Right cardiac atrium (tissue), 5 donors: ENCODE measurements at regions of chr10 and their contacts with region 1.

Region 1: DNA sequence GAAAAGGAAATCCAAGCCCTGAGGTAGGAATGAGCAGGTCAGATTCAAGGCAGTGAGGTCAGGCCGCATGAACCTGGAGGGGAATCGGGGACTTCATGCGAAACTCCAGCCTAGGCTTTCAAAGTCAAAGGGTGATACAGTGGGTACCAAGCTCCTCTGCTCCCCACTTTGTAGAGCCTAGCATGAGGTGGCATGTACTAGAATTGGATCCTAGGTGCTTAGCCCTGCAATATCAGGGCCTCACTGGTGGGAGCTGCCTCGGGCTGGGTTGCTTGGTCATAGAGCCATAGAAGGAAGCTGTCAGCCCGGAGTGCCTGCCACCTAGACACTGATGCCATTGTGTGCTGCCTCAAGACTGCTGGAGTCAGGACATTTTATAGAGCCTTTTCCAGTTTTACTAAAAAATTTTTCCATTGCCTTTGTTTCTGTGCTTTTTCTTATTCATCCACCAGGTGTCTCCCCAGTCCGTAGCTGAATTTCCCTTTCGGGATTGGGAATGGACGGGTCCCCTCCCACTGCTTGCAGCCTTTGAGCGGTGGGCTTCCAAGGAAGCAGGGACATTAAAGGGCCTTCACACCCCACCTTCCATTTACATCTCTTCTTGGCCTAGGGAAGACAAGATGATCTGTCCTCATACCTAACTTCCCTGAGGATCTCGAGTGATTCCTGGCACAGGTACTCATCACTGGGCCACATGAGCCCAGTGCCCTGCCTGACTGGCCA is 5.5 kb upstream of the LZTS2 start:
- DNase-seq: no peak
- ATAC-seq: no peak
- H3K4me3 ChIP-seq: no peak overlapping the region
- H3K27ac ChIP-seq: no peak overlapping the region
- H3K4me1 ChIP-seq: peaks cover 6% of the 10 kb centered on the region
- H3K27me3 ChIP-seq: no peaks in the 10 kb centered on the region

Region 2: DNA sequence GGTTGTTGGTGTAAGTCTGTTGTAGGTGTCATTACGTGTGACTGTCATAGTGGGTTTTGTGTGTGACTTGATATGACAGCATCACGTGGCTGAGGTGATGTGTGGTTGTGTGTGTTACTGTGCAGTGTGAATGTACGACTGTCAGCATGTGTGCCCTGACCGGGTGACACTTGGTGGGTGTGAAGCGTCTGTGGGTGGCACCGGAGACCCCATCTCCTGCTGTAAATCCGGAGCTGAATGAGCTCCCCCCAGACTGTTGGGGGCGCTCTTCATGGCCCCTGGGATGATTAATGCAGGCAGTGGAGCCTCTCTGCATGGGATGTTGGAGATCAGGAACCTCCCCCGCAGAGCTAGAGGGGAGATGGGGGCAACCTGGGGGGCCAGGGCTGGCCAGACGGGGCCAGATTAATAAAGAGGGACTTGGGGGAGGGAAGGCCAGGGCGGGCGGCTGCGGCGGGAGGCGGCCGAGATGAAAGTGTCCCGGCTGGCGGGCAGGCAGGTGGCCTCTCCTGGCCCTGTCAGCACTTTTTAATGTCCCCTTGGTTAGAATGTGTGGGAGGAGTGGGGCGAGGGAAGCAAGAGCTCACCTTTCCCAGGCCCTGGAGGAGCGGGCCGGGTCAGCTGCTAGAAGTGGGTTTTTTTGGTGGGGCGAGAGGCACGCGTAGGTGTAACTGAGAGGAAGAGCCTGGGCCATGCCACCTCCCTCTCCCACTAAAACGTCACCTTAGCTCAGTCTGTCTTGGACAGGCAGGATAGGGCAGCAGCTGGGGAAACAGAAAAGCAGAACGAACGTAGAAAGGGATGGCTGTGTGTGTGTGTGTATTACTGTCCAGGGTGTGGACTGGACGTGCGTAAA is 424.3 kb before region 1 on chr10:
- intact Hi-C with region 1: no loop called
- DNase-seq: no peak
- ATAC-seq: no peak
- H3K4me3 ChIP-seq: no peak overlapping the region
- H3K27ac ChIP-seq: no peak overlapping the region
- H3K4me1 ChIP-seq: no peaks in the 10 kb centered on the region
- H3K27me3 ChIP-seq: no peaks in the 10 kb centered on the region

Region 3: DNA sequence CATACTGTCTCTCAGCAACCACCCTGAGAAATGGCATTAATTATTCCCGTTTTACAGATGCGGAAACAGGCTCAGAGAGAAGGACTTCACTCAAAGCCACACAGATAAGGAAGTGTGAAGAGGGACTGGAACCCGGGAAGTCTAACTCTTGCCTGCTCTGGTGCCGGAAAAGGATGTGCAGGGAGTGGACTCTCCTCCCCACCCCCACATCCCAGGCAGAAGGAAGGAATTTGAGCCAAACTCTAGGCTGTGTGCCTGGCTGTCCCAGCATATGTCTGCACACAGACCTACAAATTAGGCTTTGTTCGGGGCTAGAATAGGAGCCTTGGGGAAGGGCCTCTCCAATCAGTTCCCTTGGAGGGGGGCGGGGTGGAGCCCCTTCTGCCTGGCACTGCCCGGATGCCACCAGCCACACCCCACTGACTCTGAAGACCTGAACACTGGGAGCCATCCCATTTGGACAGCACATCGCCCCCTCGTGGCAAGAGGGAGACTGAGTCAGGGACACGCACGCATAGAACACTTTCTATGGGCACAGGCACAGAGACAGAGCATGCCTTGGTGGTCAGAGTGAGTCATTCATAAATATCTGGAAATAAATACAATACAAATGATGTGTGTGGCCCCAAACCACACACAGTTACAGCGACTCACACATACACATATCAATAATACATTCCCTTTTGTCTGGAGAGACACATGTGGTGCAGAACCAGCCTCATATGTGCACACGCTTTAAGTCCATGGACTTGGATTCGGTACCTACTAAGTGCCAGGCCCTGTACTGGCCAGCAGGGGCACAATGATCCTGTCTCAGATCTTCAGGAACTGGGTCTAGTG is 18.6 kb after region 1 on chr10:
- intact Hi-C with region 1: loop called in 2 of 4 experiments (anchors 1 to 2 kb)
- DNase-seq: peak; percentile 90 to 95 (median 95)
- ATAC-seq: peak; percentile 87 to 88
- H3K4me3 ChIP-seq: no peak overlapping the region
- H3K27ac ChIP-seq: no peak overlapping the region
- H3K4me1 ChIP-seq: no peaks in the 10 kb centered on the region
- H3K27me3 ChIP-seq: no peaks in the 10 kb centered on the region